ENCODE measurements at regions of chr2 and their contacts with region 1.

Region 1: DNA sequence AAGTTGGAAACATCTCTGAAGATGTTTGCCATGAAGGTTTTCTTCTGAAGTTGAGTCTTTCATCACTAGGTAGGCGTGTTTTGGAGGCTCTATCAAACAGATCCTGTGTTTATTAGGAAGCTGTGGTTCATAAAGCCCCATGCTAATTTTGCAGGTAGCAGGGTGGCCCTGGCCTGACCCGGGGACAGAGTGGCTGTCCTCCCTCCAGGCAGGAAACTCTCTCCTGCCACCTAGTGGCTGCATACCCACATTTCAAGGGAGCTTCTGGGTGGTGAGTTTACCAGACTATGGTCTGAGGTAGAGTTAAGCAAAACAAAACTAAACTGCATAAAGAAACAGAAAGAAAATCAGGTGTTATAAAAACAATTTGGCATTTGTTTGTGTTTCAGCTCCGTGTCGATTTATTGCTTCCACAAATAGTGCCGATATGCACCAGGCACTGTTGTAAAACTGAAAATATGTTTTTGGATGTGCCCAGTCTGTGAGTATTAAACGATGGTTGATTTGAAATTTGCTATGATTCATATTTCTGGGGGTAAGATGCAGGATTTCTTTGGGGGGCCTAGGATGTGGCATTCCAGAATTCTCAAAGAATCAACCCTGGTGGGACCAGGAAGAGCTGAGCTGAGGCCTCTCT is 26.0 kb upstream of the IL37 start:
- DNase-seq: peak; percentile 39
- ATAC-seq: peak; percentile 82
- H3K4me3 ChIP-seq: no peak overlapping the region
- H3K27ac ChIP-seq: no peak overlapping the region
- H3K4me1 ChIP-seq: peaks cover 32% of the 10 kb centered on the region
- H3K27me3 ChIP-seq: no peaks in the 10 kb centered on the region
- CTCF ChIP-seq: peak; percentile 92 to 93 (median 93)
- EP300 ChIP-seq: no peak
- POLR2A ChIP-seq: no peak
- RAD21 ChIP-seq: peak; percentile 94

Region 2: DNA sequence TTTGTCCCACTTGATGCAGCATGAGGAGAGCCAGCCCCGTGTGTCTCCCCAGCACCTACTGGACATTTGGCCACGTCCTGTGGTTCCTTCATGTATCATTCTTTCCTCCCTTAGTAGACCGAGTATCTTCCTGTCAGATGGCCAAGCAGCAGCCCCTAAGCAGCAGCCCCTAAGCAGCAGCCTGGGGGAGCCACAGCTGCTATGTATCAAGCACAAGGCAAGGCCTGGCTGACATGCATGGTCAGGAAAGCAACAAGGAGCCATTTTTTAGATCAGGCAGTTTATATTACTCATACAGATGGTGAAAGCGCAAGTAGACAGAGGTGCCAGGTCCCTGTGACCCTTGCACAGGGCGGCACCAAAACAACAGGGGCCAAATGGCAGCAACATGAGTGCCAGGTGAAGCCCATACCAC is 278.5 kb before region 1 on chr2:
- CTCF ChIA-PET with region 1: no interaction called
- POLR2A ChIA-PET with region 1: no interaction called
- RAD21 ChIA-PET with region 1: no interaction called
- SMC1A ChIA-PET with region 1: no interaction called
- in situ Hi-C with region 1: no loop called
- intact Hi-C with region 1: loop called (anchors 2 kb)
- DNase-seq: no peak
- ATAC-seq: peak; percentile 20; the same call in 1 of the 3 replicates
- H3K4me3 ChIP-seq: no peak overlapping the region
- H3K27ac ChIP-seq: no peak overlapping the region
- H3K4me1 ChIP-seq: no peaks in the 10 kb centered on the region
- H3K27me3 ChIP-seq: no peaks in the 10 kb centered on the region
- CTCF ChIP-seq: no peak
- EP300 ChIP-seq: no peak
- POLR2A ChIP-seq: no peak
- RAD21 ChIP-seq: no peak

Region 3: GRCh38 chr2:112749755-112750559 is 135.0 kb before region 1 on chr2:
- CTCF ChIA-PET with region 1: interaction called, 496 read pairs
- POLR2A ChIA-PET with region 1: interaction called, 15 read pairs
- RAD21 ChIA-PET with region 1: interaction called, 281 read pairs
- SMC1A ChIA-PET with region 1: interaction called, 362 read pairs
- in situ Hi-C with region 1: no loop called
- intact Hi-C with region 1: loop called (anchors 1 kb)
- DNase-seq: no peak
- ATAC-seq: peak; percentile 95
- H3K4me3 ChIP-seq: no peak overlapping the region
- H3K27ac ChIP-seq: no peak overlapping the region
- H3K4me1 ChIP-seq: no peaks in the 10 kb centered on the region
- H3K27me3 ChIP-seq: no peaks in the 10 kb centered on the region
- CTCF ChIP-seq: peak; percentile 95 to 98 (median 98); a peak in 5 of 6 replicates
- EP300 ChIP-seq: no peak
- POLR2A ChIP-seq: no peak
- RAD21 ChIP-seq: peak; percentile 98

Region 4: GRCh38 chr2:112772322-112772721 is 112.7 kb before region 1 on chr2:
- CTCF ChIA-PET with region 1: interaction called, 17 read pairs
- POLR2A ChIA-PET with region 1: no interaction called
- RAD21 ChIA-PET with region 1: no interaction called
- SMC1A ChIA-PET with region 1: interaction called, 3 read pairs
- in situ Hi-C with region 1: no loop called
- intact Hi-C with region 1: no loop called
- DNase-seq: no peak
- ATAC-seq: no peak
- H3K4me3 ChIP-seq: no peak overlapping the region
- H3K27ac ChIP-seq: no peak overlapping the region
- H3K4me1 ChIP-seq: no peaks in the 10 kb centered on the region
- H3K27me3 ChIP-seq: no peaks in the 10 kb centered on the region
- CTCF ChIP-seq: no peak
- EP300 ChIP-seq: no peak
- POLR2A ChIP-seq: no peak
- RAD21 ChIP-seq: no peak

Region 5: GRCh38 chr2:112811841-112812306 is 73.1 kb before region 1 on chr2:
- CTCF ChIA-PET with region 1: interaction called, 15 read pairs
- POLR2A ChIA-PET with region 1: interaction called, 4 read pairs
- RAD21 ChIA-PET with region 1: interaction called, 13 read pairs
- SMC1A ChIA-PET with region 1: interaction called, 15 read pairs
- in situ Hi-C with region 1: no loop called
- intact Hi-C with region 1: loop called (anchors 2 kb)
- DNase-seq: no peak
- ATAC-seq: peak; percentile 76
- H3K4me3 ChIP-seq: no peak overlapping the region
- H3K27ac ChIP-seq: peak overlapping the region; percentile 55
- H3K4me1 ChIP-seq: peaks cover 15% of the 10 kb centered on the region
- H3K27me3 ChIP-seq: no peaks in the 10 kb centered on the region
- CTCF ChIP-seq: no peak
- EP300 ChIP-seq: no peak
- POLR2A ChIP-seq: no peak
- RAD21 ChIP-seq: 0 out of 2 replicates have a peak, but pooled peaks have one; percentile 8

Region 6: DNA sequence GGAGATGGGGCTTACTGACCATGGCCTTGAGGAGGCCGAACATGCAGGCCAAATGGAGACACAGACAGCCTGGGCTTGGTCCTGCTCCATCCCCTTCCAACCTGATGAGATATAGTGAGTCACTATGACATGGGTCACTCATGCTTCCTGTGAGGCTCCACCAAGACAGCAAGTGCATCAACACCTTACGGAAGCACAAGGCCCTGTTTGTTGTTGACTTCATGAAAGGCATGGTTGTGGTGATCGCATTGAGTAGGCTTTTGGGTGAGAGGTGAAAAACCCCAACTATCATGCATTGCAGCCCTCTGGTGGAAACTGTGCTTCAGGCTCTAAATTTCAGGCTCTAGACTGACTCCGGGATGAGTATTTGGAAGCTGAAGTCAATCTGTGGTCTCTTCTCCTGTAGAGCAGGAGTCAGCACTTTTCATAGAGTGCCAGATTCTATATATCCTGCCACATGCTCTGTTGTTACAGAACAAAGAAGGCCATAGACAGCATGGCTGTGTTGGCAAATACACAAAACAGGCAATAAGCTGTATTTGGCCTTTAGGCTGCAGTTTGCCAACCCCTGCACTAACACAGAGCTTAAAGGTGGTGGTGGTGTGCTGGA is 36.0 kb after region 1 on chr2:
- CTCF ChIA-PET with region 1: interaction called, 12 read pairs
- POLR2A ChIA-PET with region 1: no interaction called
- RAD21 ChIA-PET with region 1: interaction called, 4 read pairs
- SMC1A ChIA-PET with region 1: interaction called, 6 read pairs
- in situ Hi-C with region 1: no loop called
- intact Hi-C with region 1: no loop called
- DNase-seq: no peak
- ATAC-seq: no peak
- H3K4me3 ChIP-seq: no peak overlapping the region
- H3K27ac ChIP-seq: no peak overlapping the region
- H3K4me1 ChIP-seq: peaks cover 5% of the 10 kb centered on the region
- H3K27me3 ChIP-seq: peaks cover 2 to 3% of the 10 kb centered on the region in 2 experiments; a peak in 2 of 4 replicates
- CTCF ChIP-seq: no peak
- EP300 ChIP-seq: no peak
- POLR2A ChIP-seq: no peak
- RAD21 ChIP-seq: no peak

Region 7: DNA sequence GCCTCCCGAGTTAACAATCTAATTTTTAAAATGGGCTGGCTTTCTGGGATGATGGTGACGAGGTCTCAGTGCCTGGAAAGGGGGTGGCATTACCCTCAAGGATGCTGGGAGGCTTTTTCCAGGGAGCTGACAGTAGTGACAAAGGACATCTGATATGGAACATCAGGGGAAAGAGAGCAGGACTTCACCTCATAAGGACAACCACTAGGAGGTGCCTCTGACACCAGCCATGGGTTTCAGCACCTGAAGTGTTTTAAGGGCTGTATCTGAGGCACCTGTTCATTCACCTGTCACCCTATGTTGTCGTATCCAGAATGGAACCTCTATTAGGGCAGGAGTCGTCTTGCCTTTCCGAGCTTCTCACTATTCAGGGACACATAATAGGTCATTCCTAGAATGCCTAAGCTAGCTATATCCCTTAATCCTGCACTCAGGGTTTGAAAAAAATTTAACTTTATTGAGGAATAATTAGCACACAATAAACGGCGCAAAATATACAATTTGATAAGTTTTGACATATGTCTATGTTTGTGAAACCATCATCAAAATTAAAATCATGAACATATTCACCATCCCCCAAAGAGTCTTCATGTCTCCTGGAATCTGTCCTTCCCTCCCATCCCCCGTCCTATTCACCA is 157.0 kb after region 1 on chr2:
- CTCF ChIA-PET with region 1: no interaction called
- POLR2A ChIA-PET with region 1: no interaction called
- RAD21 ChIA-PET with region 1: no interaction called
- SMC1A ChIA-PET with region 1: no interaction called
- in situ Hi-C with region 1: no loop called
- intact Hi-C with region 1: no loop called
- DNase-seq: no peak
- ATAC-seq: no peak
- H3K4me3 ChIP-seq: no peak overlapping the region
- H3K27ac ChIP-seq: no peak overlapping the region
- H3K4me1 ChIP-seq: no peaks in the 10 kb centered on the region
- H3K27me3 ChIP-seq: peaks cover 0 to 1% of the 10 kb centered on the region in 2 experiments; a peak in 1 of 4 replicates
- CTCF ChIP-seq: peak in 1 of 3 experiments; percentile 18; a peak in 1 of 6 replicates
- EP300 ChIP-seq: no peak
- POLR2A ChIP-seq: no peak
- RAD21 ChIP-seq: no peak